ENCODE measurements at regions of chr1 and their contacts with region 1.

Region 1: GRCh38 chr1:231335663-231336602 is 1.7 kb downstream of the EXOC8 start:
- DNase-seq: peak; percentile 39
- ATAC-seq: no peak
- H3K4me3 Mint-ChIP-seq: peak overlapping the region; percentile 100
- H3K27ac Mint-ChIP-seq: peak overlapping the region; percentile 99
- H3K4me1 Mint-ChIP-seq: peaks cover 57% of the 10 kb centered on the region
- H3K27me3 Mint-ChIP-seq: no peaks in the 10 kb centered on the region
- CTCF ChIP-seq: no peak

Region 2: GRCh38 chr1:231106347-231106746 is 229.6 kb before region 1 on chr1:
- CTCF ChIA-PET with region 1: no interaction called
- POLR2A ChIA-PET with region 1: no interaction called
- intact Hi-C with region 1: no loop called
- DNase-seq: no peak
- ATAC-seq: no peak
- H3K4me3 Mint-ChIP-seq: no peak overlapping the region
- H3K27ac Mint-ChIP-seq: no peak overlapping the region
- H3K4me1 Mint-ChIP-seq: peaks cover 14% of the 10 kb centered on the region
- H3K27me3 Mint-ChIP-seq: peaks cover 8% of the 10 kb centered on the region
- CTCF ChIP-seq: no peak

Region 3: DNA sequence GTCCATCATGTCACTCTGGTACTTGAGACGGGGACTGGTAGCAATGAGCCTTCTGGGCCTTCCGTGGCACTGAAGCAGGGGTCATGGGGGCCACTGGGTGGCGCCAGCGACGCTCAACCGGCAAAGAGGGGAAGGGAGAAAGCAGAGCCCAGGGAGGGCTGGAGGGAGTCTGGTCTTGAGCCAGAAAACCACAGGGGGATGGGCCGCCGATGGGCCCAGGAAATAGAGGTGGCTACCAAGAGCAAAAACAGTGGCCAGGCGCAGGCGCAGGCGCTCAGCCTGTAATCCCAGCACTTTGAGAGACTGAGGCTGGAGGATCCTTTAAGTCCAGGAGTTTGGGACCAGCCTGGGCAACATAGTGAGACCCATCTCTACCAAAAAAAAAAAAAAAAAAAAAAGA is 20.0 kb before region 1 on chr1:
- CTCF ChIA-PET with region 1: interaction called, 17 read pairs
- POLR2A ChIA-PET with region 1: no interaction called
- intact Hi-C with region 1: no loop called
- DNase-seq: peak; percentile 66
- ATAC-seq: peak; percentile 93
- H3K4me3 Mint-ChIP-seq: no peak overlapping the region
- H3K27ac Mint-ChIP-seq: no peak overlapping the region
- H3K4me1 Mint-ChIP-seq: no peaks in the 10 kb centered on the region
- H3K27me3 Mint-ChIP-seq: no peaks in the 10 kb centered on the region
- CTCF ChIP-seq: peak; percentile 54